ENCODE measurements at regions of chr20 and their contacts with region 1.

Region 1: GRCh38 chr20:49610701-49611538 is 43.0 kb upstream of the PTGIS start:
- ATAC-seq: peak; percentile 83 to 90 (median 87)
- H3K4me3 ChIP-seq: peak overlapping the region in 1 of 5 donors; percentile 16
- H3K27ac ChIP-seq: no peak overlapping the region
- H3K4me1 ChIP-seq: no peaks in the 10 kb centered on the region

Region 2: GRCh38 chr20:49338061-49338460 is 272.9 kb before region 1 on chr20:
- in situ Hi-C with region 1: loop called in 4 of 9 experiments (anchors 10 kb)
- ATAC-seq: no peak
- H3K4me3 ChIP-seq: no peak overlapping the region
- H3K27ac ChIP-seq: no peak overlapping the region
- H3K4me1 ChIP-seq: no peaks in the 10 kb centered on the region

Region 3: GRCh38 chr20:49541733-49542513 is 69.0 kb before region 1 on chr20:
- in situ Hi-C with region 1: loop called in 1 of 9 experiments (anchors 10 kb)
- ATAC-seq: peak in 7 of 8 experiments; percentile 13 to 91 (median 35)
- H3K4me3 ChIP-seq: no peak overlapping the region
- H3K27ac ChIP-seq: no peak overlapping the region
- H3K4me1 ChIP-seq: peaks cover 2% of the 10 kb centered on the region in 2 donors

Region 4: GRCh38 chr20:49846206-49846807 is 235.4 kb after region 1 on chr20:
- in situ Hi-C with region 1: loop called in 4 of 9 experiments (anchors 25 kb)
- ATAC-seq: peak in 3 of 8 experiments; percentile 80 to 89 (median 85)
- H3K4me3 ChIP-seq: no peak overlapping the region
- H3K27ac ChIP-seq: no peak overlapping the region
- H3K4me1 ChIP-seq: peaks cover 14 to 18% of the 10 kb centered on the region in 2 donors

Region 5: GRCh38 chr20:49853640-49854039 is 242.7 kb after region 1 on chr20:
- in situ Hi-C with region 1: loop called in 4 of 9 experiments (anchors 25 kb)
- ATAC-seq: peak; percentile 86 to 97 (median 91)
- H3K4me3 ChIP-seq: no peak overlapping the region
- H3K27ac ChIP-seq: peak overlapping the region in 1 of 2 donors; percentile 39
- H3K4me1 ChIP-seq: peaks cover 35 to 36% of the 10 kb centered on the region in 2 donors

Region 6: DNA sequence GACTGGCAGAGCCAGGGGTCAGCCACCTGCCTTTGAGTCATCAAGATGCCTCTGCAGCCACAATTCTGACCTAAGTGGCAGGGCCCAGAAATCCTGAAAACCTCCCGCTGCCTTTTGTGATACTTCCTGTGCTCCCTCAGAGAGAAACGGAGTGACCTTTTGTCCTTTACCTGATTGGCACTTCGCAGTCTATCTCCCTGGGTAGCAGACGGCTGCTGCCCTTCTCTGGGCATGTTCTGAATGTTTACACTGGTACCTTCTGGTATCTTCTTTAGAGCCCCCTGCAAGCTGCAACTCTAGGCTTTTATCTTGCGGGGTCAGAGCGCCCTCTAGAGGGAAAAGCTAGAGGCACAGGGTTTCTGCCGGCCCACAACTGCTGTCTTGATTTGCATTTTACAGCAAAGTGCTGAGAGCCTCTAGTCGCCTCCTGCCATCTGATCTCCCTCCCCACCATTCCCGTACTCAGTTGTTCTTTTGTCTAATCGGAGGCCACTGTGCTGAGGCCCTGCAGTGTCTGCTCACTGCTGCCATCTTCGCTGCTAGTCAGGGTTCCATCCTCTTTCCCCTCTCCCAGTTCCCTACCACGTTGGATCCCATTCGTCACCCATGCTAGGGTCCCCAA is 277.5 kb after region 1 on chr20:
- in situ Hi-C with region 1: loop called in 3 of 9 experiments (anchors 25 kb)
- ATAC-seq: peak; percentile 59 to 81 (median 68)
- H3K4me3 ChIP-seq: no peak overlapping the region
- H3K27ac ChIP-seq: peak overlapping the region; percentile 22 to 56
- H3K4me1 ChIP-seq: peaks cover 43 to 53% of the 10 kb centered on the region in 2 donors

Region 7: DNA sequence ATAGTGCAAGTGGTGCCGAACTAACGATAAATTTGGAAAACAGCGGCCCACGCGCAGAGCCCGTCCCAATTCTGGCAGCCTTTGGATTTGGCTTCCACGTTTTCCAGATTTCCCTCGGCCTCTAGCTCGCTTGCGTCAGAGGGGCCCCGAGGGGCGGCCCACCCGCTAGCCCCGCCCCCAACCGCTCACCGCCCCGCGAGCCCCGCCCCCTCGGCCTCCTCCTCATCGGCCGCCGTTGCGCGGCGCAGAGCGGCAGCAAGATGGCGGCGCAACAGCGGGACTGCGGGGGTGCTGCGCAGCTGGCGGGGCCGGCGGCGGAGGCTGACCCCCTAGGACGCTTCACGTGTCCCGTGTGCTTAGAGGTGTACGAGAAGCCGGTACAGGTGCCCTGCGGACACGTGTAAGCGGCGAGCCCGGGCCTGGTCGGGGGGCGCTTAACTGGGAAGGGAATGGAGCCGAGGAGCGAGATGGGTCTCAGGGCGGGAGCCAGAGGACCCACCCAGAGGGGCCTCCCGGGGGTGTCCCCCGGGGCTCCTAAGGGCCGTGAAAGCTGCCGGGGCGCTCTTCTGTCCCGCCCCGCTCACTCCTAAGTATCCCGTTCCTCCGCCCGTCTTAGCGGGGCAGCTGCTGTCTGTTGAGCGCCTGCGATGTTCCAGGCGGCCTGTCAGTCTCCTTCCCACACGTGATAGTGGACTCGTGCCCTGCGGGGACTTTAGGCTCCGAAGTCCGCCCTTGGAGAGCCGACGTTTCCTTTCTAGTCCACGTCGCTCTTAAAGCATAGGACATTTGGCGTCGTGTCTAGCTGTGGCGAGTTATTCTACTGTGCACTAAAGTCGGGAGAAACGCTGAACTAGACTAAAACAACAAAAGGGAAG is 325.5 kb after region 1 on chr20 and contains the start of gene RNF114:
- in situ Hi-C with region 1: loop called in 1 of 9 experiments (anchors 25 kb)
- ATAC-seq: peak; percentile 68 to 90 (median 86)
- H3K4me3 ChIP-seq: peak within 1 kb of the TSS; percentile 79 to 98 (median 89)
- H3K27ac ChIP-seq: peak within 1 kb of the TSS; percentile 81
- H3K4me1 ChIP-seq: peaks cover 21 to 22% of the 10 kb centered on the region in 2 donors
- total RNA-seq, gene RNF114: 27.8 to 125 (median 46.0) TPM